Mammary epithelial cell (primary cell): ENCODE measurements at regions of chr5 and their contacts with region 1.

Region 1: GRCh38 chr5:151141535-151141934 is 16.0 kb downstream of the ANXA6 start:
- DNase-seq: peak; percentile 40
- H3K4me3 ChIP-seq: no peak overlapping the region
- H3K27ac ChIP-seq: no peak overlapping the region
- H3K4me1 ChIP-seq: peaks cover 8% of the 10 kb centered on the region
- H3K27me3 ChIP-seq: no peaks in the 10 kb centered on the region
- CTCF ChIP-seq: no peak

Region 2: GRCh38 chr5:151191659-151192058 is 50.1 kb after region 1 on chr5:
- CTCF ChIA-PET with region 1: no interaction called
- dilution Hi-C with region 1: loop called (anchors 5 kb)
- in situ Hi-C with region 1: no loop called
- intact Hi-C with region 1: no loop called
- DNase-seq: no peak
- H3K4me3 ChIP-seq: no peak overlapping the region
- H3K27ac ChIP-seq: no peak overlapping the region
- H3K4me1 ChIP-seq: no peaks in the 10 kb centered on the region
- H3K27me3 ChIP-seq: no peaks in the 10 kb centered on the region
- CTCF ChIP-seq: no peak